ENCODE measurements at regions of chr3 and their contacts with region 1.

Region 1: DNA sequence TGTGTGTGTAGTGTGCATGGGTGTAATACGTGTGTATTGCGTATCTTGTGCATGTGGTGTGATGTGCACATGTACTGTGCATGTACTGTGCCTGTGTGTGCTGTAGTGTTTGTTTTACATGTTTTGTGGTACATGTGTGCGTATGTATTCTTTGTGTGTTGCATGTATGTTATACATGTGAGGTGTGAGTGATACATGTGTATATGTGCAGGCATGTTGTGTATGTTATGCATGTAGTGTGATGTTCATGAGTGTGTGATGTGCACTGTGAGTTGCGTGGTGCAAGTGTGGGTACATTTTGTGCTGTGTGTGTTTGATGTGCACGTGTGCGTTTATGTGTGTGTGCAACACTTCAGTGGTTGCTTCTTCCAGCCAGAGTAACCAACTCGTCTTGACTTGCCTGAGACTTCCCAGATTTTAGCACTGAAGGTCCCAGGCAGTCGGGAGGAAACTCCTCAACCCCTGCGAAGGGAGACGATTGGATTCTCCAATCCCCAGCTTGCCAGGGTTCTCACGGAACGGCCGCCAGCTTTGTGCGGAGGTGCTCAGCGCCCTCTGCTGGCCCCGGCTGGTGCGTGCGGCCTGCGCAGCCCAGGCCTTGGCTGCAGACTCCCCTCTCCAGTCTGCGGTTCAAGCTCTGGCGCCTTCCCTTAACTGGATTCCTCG is 3.6 kb downstream of the GALNT15 start:
- H3K4me3 ChIP-seq: no peak overlapping the region
- H3K27ac ChIP-seq: no peak overlapping the region
- H3K4me1 ChIP-seq: no peaks in the 10 kb centered on the region
- CTCF ChIP-seq: peak; percentile 95

Region 2: DNA sequence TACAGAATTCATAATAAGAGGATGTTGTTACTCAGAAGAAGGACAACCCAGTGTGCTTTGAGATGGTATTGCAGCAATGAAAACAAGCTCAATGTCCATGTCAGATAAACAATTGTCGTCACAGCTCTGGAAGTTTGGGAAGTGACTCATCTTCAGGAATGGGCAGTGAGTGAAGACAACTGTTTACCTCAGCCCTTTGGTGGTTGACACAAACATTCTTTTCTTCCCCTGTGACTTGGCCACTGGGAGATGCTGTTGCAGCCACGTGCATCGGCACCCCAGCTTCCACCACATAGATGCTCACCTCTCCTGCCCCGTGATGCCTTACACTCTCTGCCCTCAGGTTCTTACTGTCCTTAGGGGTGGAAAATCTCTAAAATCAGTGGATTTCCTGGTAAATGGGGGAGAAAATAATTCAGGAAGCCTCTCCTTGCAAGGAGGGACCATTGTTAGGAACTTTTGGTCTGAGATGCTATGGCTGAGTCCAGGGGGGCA is 117.7 kb before region 1 on chr3:
- CTCF ChIA-PET with region 1: interaction called, 14 read pairs
- POLR2A ChIA-PET with region 1: no interaction called
- H3K4me3 ChIP-seq: no peak overlapping the region
- H3K27ac ChIP-seq: no peak overlapping the region
- H3K4me1 ChIP-seq: peaks cover 8% of the 10 kb centered on the region
- CTCF ChIP-seq: peak; percentile 66

Region 3: DNA sequence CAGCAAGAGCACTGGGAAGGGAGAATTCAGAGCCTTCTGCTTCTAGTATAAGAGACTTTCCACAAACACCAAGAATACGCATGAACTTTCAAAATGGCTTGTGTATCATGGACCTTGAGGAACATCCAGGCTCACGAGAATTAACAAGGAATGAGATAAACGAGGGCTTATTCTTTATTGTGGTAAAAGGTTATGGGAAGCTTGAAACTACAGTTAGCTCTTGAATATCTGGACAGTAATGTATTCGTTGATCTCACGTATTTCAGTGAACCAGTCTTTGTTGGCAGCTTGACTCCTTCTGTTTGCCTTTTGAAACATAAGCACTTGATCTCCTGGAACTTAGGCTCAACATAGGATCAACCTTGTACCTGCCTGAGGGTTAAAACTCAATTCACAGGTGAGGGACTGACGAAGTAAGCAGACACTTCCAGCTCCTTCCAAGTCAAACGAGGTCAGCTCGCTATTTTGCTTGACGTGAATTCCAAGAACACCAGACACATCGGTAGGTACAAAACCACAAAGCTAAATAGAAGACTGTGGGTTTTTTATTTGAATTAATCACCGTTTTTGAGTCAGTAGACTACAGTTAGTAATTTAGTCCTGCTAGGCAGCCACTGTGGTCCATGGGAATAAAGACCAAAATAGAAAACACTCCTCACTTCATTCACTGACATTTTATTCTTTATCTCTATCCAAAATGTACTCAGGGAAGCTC is 27.2 kb after region 1 on chr3:
- CTCF ChIA-PET with region 1: no interaction called
- POLR2A ChIA-PET with region 1: no interaction called
- H3K4me3 ChIP-seq: no peak overlapping the region
- H3K27ac ChIP-seq: no peak overlapping the region
- H3K4me1 ChIP-seq: 0 out of 2 replicates have a peak, but pooled peaks cover 2% of the 10 kb centered on the region
- CTCF ChIP-seq: no peak

Measured in HEK293 (cell line).